ENCODE measurements at regions of chr20 and their contacts with region 1.

Region 1: GRCh38 chr20:34516247-34517113 is at the start of gene DYNLRB1:
- DNase-seq: peak; percentile 93

Region 2: DNA sequence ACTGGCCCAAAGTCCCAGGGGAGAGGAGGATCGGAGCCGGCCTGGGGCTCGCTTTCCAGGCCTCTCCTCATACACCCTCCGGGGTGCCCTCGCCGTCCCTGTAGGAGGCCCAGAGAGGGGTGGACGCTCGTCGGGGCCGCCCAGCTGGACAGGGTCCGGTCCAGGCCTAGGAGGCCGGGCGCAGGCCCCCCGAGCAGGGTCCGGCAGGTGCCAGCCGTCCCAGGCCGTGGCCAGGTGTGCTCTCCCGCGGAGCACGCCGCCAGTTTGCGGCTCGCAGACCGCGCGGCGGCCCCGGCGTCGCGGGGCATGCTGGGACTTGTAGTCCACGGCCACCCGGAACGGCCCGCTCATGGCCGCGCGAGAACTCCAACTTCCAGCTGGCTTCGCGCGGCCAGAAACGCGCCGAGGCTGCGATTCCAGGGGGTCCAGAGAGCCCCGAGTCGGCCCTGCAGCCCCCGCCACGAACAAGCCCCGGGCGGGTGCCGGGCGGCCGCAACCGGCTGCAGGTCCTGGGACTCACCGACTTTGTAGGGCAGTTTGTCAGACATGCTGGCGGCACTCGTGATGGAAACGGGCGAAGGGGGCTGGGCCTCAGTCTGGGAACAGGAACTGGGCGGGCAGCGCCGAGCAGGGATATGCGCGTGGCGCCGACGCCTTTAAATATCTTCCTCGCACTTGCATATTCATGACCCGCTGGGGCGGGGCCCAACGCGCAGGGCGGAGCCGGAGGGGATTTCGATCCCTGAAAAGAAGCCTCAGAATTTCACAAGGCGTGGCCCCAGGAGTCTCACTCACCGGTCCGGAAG is 213.6 kb before region 1 on chr20 and contains the start of gene AHCY:
- CTCF ChIA-PET with region 1: interaction called, 4 read pairs
- POLR2A ChIA-PET with region 1: interaction called, 18 read pairs
- DNase-seq: peak; percentile 91

Region 3: DNA sequence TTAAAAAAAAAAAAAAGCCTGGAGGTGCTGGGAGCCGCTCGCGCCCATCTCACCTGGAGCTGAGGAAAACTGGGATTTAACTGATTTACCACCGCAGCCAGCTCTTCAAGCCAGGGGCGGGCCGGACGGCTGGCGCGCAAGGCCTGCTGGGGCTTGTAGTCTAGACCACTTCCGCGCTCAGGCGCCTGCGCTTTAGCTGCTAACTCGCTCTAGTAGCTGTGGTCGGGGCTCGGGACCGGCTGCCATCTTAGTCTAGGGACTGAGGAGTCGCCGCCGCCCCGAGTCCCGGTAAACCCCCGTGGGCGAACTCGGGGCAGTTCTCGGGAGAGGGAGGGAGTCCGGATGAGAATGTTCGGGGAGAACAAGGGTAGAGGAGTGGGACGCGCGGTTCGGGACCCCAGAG is 153.4 kb before region 1 on chr20 and contains the start of gene ITCH:
- CTCF ChIA-PET with region 1: no interaction called
- POLR2A ChIA-PET with region 1: interaction called, 15 read pairs
- DNase-seq: peak; percentile 95

Region 4: GRCh38 chr20:34506480-34506879 is 10.0 kb before region 1 on chr20:
- CTCF ChIA-PET with region 1: no interaction called
- POLR2A ChIA-PET with region 1: interaction called, 15 read pairs
- DNase-seq: no peak

Region 5: DNA sequence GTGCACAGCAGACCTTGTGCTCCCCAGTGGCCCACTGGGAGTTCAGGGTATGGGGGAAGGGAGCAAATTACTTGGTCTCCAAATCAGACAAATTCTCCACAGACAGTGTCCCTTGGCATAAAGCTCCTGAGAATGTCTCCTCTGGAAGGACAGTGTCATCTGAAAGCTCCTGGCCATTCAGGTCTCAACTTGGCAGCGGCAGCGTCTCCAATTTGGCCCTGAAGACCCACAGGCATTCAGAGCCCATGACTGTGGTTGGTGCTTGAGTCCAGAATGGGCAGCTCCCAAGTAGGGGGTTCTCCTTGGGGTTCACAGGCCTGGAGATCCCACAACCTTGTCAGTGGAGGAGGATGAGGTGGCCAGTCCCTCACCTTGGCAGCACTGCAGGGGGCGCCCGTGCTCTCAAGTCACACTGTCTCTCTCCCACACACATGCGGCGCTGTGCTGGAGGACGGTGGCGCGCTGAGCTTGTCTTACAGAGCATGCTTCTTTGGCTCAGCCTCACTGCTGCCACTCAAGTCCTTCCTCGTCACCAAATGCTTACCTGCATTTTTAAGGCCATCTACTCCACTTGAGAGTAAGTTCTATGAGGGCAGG is 20.4 kb after region 1 on chr20:
- CTCF ChIA-PET with region 1: interaction called, 4 read pairs
- POLR2A ChIA-PET with region 1: interaction called, 13 read pairs
- DNase-seq: peak; percentile 45

Measured in HEK293T (cell line).